Sigmoid colon (tissue), 7 donors: ENCODE measurements at regions of chr9 and their contacts with region 1.

Region 1: DNA sequence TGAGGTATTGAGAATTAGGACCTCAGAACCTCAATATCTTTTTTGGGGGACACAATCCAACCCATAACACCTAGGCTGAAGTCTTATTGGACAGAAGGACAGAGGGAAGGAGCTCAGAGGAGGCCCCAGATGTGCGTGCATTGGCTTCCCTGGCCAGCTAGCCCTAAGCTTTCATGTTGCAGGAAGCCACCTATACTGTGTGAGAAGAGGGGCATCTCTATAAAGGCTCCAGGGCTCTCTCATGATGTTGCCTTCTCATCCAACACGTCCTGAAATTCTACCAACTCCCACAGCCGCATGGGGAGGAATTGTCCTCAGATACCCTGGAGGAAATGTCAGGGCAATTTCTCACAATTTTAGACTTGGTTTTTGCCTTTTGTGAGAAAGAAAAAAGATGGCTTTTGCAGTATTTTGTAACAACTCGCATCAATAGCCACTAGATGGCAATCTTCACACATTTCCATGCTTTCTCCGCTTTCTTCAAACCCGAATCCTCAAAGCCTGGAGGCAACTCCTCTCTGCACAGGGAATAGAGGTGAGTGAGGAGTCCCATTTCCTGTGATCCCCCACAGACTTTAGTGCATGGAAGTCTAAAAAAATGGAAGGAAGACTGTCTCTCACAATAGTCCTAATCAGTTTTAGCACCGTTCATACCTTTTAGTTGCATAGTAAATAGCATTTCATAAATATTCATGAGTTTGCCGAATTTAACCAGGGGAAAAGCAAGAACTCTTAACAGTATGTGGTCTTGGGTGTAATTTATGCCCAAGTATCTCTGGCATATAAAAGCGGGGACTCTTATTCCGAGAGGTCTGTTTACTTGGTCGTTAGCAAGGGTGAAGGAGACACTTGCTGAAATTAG is 7.4 kb upstream of the PPP3R2 start:
- DNase-seq: no peak
- H3K4me3 ChIP-seq: no peak overlapping the region
- H3K27ac ChIP-seq: no peak overlapping the region
- H3K4me1 ChIP-seq: peaks cover 0 to 4% (median 0%) of the 10 kb centered on the region in 4 donors
- H3K27me3 ChIP-seq: no peaks in the 10 kb centered on the region
- CTCF ChIP-seq: peak in 3 of 4 experiments; percentile 40 to 55 (median 50)
- EP300 ChIP-seq: no peak
- POLR2A ChIP-seq: no peak

Region 2: GRCh38 chr9:101727612-101728524 is 125.7 kb after region 1 on chr9:
- intact Hi-C with region 1: loop called (anchors 5 kb)
- DNase-seq: no peak
- H3K4me3 ChIP-seq: no peak overlapping the region
- H3K27ac ChIP-seq: no peak overlapping the region
- H3K4me1 ChIP-seq: no peaks in the 10 kb centered on the region
- H3K27me3 ChIP-seq: no peaks in the 10 kb centered on the region
- CTCF ChIP-seq: peak in 3 of 4 experiments; percentile 28 to 34 (median 33)
- EP300 ChIP-seq: no peak
- POLR2A ChIP-seq: no peak